HepG2 (cell line): ENCODE measurements at regions of chr3 and their contacts with region 1.

Region 1: DNA sequence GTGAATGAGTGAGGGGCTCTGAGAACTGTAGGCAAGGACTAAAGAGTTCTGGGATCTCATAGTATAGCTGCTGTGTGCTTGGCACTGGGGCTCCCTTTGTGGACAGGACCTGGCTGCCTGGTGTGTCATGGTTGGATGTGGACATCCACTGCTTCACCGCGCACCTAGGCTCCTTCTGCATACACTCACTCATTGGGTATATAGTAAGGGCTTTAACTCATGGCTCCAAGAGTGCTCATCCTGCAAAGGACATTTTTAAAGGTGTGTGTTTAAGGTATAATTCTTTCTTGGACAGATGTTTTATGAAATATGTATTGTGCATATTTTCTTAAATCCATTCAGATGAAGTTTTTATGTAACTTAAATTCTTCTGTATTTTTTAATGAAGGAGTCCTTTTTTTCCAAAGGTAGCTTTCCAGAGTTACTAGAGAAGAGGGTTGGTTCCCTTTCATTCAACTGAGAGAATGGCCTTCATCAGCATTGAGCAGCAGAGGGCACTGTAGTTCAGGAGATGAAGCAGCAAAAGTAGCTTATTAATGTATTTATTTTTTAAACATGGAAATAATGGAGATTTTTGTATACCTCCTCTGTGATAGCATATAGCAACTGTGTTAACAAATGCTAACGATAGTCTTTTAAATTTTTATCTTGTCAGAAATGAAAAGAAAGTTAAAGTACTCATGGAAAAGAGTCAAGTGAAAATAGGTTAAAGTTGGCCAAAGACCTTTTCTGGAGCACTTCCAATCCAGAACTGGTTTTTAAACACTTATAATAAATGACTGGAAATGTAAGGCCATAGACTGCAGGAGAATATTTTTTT is 25.2 kb downstream of the OXNAD1 start:
- DNase-seq: peak; percentile 37
- ATAC-seq: peak; percentile 68; the same call in 2 of the 3 replicates
- H3K4me3 ChIP-seq: no peak overlapping the region
- H3K27ac ChIP-seq: no peak overlapping the region
- H3K4me1 ChIP-seq: no peaks in the 10 kb centered on the region
- H3K27me3 ChIP-seq: no peaks in the 10 kb centered on the region
- CTCF ChIP-seq: peak; percentile 76
- EP300 ChIP-seq: no peak
- POLR2A ChIP-seq: no peak
- RAD21 ChIP-seq: peak; percentile 70

Region 2: GRCh38 chr3:16511681-16512434 is 221.6 kb after region 1 on chr3:
- CTCF ChIA-PET with region 1: interaction called, 3 read pairs
- POLR2A ChIA-PET with region 1: no interaction called
- in situ Hi-C with region 1: loop called (anchors 10 kb)
- intact Hi-C with region 1: loop called (anchors 1 kb)
- DNase-seq: no peak
- ATAC-seq: no peak; the same call in 2 of the 3 replicates
- H3K4me3 ChIP-seq: no peak overlapping the region
- H3K27ac ChIP-seq: no peak overlapping the region
- H3K4me1 ChIP-seq: 0 out of 2 replicates have a peak, but pooled peaks cover 7% of the 10 kb centered on the region
- H3K27me3 ChIP-seq: peaks cover 6 to 60% of the 10 kb centered on the region in 2 experiments
- CTCF ChIP-seq: no peak
- EP300 ChIP-seq: no peak
- POLR2A ChIP-seq: no peak
- RAD21 ChIP-seq: no peak

Region 3: GRCh38 chr3:16516695-16517481 is 226.7 kb after region 1 on chr3:
- CTCF ChIA-PET with region 1: interaction called, 3 read pairs
- POLR2A ChIA-PET with region 1: no interaction called
- in situ Hi-C with region 1: loop called (anchors 10 kb)
- intact Hi-C with region 1: loop called (anchors 1 kb)
- DNase-seq: peak; percentile 33
- ATAC-seq: peak; percentile 80
- H3K4me3 ChIP-seq: no peak overlapping the region
- H3K27ac ChIP-seq: no peak overlapping the region
- H3K4me1 ChIP-seq: 0 out of 2 replicates have a peak, but pooled peaks cover 7% of the 10 kb centered on the region
- H3K27me3 ChIP-seq: peaks cover 2 to 39% of the 10 kb centered on the region in 2 experiments
- CTCF ChIP-seq: peak; percentile 58
- EP300 ChIP-seq: no peak
- POLR2A ChIP-seq: no peak
- RAD21 ChIP-seq: peak; percentile 12; the same call in 1 of the 2 replicates

Region 4: GRCh38 chr3:16550676-16551341 is 260.6 kb after region 1 on chr3:
- CTCF ChIA-PET with region 1: interaction called, 51 read pairs
- POLR2A ChIA-PET with region 1: no interaction called
- in situ Hi-C with region 1: loop called (anchors 5 kb)
- intact Hi-C with region 1: loop called (anchors 1 kb)
- DNase-seq: peak; percentile 76
- ATAC-seq: peak; percentile 100
- H3K4me3 ChIP-seq: no peak overlapping the region
- H3K27ac ChIP-seq: no peak overlapping the region
- H3K4me1 ChIP-seq: no peaks in the 10 kb centered on the region
- H3K27me3 ChIP-seq: peaks cover 0 to 21% of the 10 kb centered on the region in 2 experiments; a peak in 1 of 5 replicates
- CTCF ChIP-seq: peak; percentile 91
- EP300 ChIP-seq: no peak
- POLR2A ChIP-seq: no peak
- RAD21 ChIP-seq: peak; percentile 86; the same call in 1 of the 2 replicates